CD8-positive, alpha-beta T cell (primary cell): ENCODE measurements at regions of chr14 and their contacts with region 1.

Region 1: GRCh38 chr14:75906676-75907280 is 75.0 kb downstream of the TGFB3 start:
- DNase-seq: peak; percentile 30 to 76 (median 70)
- ATAC-seq: peak; percentile 49
- H3K4me3 ChIP-seq: no peak overlapping the region
- H3K4me3 Mint-ChIP-seq: no peak overlapping the region
- H3K27ac ChIP-seq: no peak overlapping the region
- H3K27ac Mint-ChIP-seq: no peak overlapping the region
- H3K4me1 ChIP-seq: no peaks in the 10 kb centered on the region
- H3K4me1 Mint-ChIP-seq: no peaks in the 10 kb centered on the region
- H3K27me3 ChIP-seq: no peaks in the 10 kb centered on the region
- H3K27me3 Mint-ChIP-seq: no peaks in the 10 kb centered on the region
- CTCF ChIP-seq: peak; percentile 86

Region 2: GRCh38 chr14:75709207-75709812 is 197.5 kb before region 1 on chr14:
- CTCF ChIA-PET with region 1: interaction called, 10 read pairs
- POLR2A ChIA-PET with region 1: no interaction called
- intact Hi-C with region 1: loop called in 1 of 2 experiments (anchors 10 kb)
- DNase-seq: peak; percentile 23 to 76 (median 62)
- ATAC-seq: peak; percentile 68
- H3K4me3 ChIP-seq: no peak overlapping the region
- H3K4me3 Mint-ChIP-seq: no peak overlapping the region
- H3K27ac ChIP-seq: no peak overlapping the region
- H3K27ac Mint-ChIP-seq: no peak overlapping the region
- H3K4me1 ChIP-seq: no peaks in the 10 kb centered on the region
- H3K4me1 Mint-ChIP-seq: no peaks in the 10 kb centered on the region
- H3K27me3 ChIP-seq: no peaks in the 10 kb centered on the region
- H3K27me3 Mint-ChIP-seq: no peaks in the 10 kb centered on the region
- CTCF ChIP-seq: peak; percentile 78

Region 3: GRCh38 chr14:75888945-75889344 is 17.8 kb before region 1 on chr14:
- CTCF ChIA-PET with region 1: interaction called, 27 read pairs
- POLR2A ChIA-PET with region 1: no interaction called
- intact Hi-C with region 1: no loop called
- DNase-seq: no peak
- ATAC-seq: no peak
- H3K4me3 ChIP-seq: no peak overlapping the region
- H3K4me3 Mint-ChIP-seq: no peak overlapping the region
- H3K27ac ChIP-seq: no peak overlapping the region
- H3K27ac Mint-ChIP-seq: no peak overlapping the region
- H3K4me1 ChIP-seq: no peaks in the 10 kb centered on the region
- H3K4me1 Mint-ChIP-seq: no peaks in the 10 kb centered on the region
- H3K27me3 ChIP-seq: no peaks in the 10 kb centered on the region
- H3K27me3 Mint-ChIP-seq: no peaks in the 10 kb centered on the region
- CTCF ChIP-seq: no peak

Region 4: GRCh38 chr14:75896341-75896740 is 10.4 kb before region 1 on chr14:
- CTCF ChIA-PET with region 1: interaction called, 27 read pairs
- POLR2A ChIA-PET with region 1: no interaction called
- intact Hi-C with region 1: no loop called
- DNase-seq: no peak
- ATAC-seq: no peak
- H3K4me3 ChIP-seq: no peak overlapping the region
- H3K4me3 Mint-ChIP-seq: no peak overlapping the region
- H3K27ac ChIP-seq: no peak overlapping the region
- H3K27ac Mint-ChIP-seq: no peak overlapping the region
- H3K4me1 ChIP-seq: no peaks in the 10 kb centered on the region
- H3K4me1 Mint-ChIP-seq: peaks cover 7% of the 10 kb centered on the region
- H3K27me3 ChIP-seq: no peaks in the 10 kb centered on the region
- H3K27me3 Mint-ChIP-seq: no peaks in the 10 kb centered on the region
- CTCF ChIP-seq: no peak

Region 5: DNA sequence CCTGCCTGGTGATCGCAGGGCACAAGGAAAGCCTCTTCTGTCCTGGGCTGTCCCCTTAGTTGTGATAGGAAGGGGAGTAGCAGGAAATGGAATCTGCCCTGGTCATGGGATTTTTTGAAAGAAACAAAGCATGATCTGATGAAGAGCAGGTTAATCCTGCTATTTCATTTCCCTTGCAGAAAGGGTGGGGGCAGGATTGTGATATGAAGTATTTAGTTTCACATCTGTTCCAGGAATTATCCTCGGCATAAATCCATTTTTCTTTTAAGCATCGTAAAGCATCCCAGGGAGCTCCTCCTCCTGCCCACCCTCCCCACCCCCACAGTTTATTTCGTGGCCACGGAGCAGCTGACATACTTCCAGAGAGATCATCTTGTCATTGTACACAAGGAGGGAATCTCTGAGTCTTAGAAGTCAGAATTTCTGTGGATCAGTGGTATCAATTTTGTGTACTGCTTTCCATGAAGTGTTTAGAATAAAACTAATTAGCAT is 22.0 kb after region 1 on chr14:
- CTCF ChIA-PET with region 1: no interaction called
- POLR2A ChIA-PET with region 1: no interaction called
- intact Hi-C with region 1: no loop called
- DNase-seq: no peak
- ATAC-seq: no peak
- H3K4me3 ChIP-seq: no peak overlapping the region
- H3K4me3 Mint-ChIP-seq: no peak overlapping the region
- H3K27ac ChIP-seq: no peak overlapping the region
- H3K27ac Mint-ChIP-seq: no peak overlapping the region
- H3K4me1 ChIP-seq: no peaks in the 10 kb centered on the region
- H3K4me1 Mint-ChIP-seq: no peaks in the 10 kb centered on the region
- H3K27me3 ChIP-seq: no peaks in the 10 kb centered on the region
- H3K27me3 Mint-ChIP-seq: no peaks in the 10 kb centered on the region
- CTCF ChIP-seq: no peak

Region 6: DNA sequence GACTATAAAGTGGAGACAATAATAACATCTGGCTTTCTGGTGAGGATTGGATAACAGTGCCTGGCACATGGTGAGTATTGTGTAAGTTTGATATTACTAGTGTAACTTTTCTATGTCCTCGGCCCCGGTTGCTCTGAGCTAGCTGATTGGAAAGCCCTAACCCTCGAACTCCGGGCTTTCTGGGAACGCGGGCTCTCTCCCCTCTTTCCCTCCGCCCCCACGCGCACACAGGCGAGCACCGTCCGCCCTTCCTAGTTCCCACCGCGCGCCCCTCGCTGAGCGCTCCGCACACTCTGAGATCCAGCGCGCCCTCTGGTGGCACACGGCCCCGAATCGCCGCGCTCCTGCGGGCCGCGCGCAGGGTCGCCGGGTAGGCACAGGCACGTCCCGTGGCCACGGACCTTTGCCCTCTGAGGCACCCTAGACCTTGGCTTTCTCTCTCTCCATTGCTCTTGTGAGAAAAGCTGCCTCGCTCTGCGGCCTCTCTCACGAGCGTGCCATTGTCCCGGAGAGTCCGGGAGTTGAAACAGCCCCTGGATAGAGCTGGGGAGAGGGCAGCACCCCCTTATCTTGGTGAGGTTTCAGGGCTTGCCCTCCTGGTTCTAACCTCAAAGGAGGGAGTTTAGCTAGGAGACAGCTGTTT is 446.0 kb after region 1 on chr14:
- CTCF ChIA-PET with region 1: no interaction called
- POLR2A ChIA-PET with region 1: no interaction called
- intact Hi-C with region 1: loop called in 1 of 2 experiments (anchors 5 kb)
- DNase-seq: peak; percentile 5 to 67 (median 50)
- ATAC-seq: no peak
- H3K4me3 ChIP-seq: no peak overlapping the region
- H3K4me3 Mint-ChIP-seq: peak overlapping the region; percentile 30
- H3K27ac ChIP-seq: no peak overlapping the region
- H3K27ac Mint-ChIP-seq: no peak overlapping the region
- H3K4me1 ChIP-seq: no peaks in the 10 kb centered on the region
- H3K4me1 Mint-ChIP-seq: peaks cover 4% of the 10 kb centered on the region
- H3K27me3 ChIP-seq: peaks cover 0 to 2% of the 10 kb centered on the region in 2 experiments
- H3K27me3 Mint-ChIP-seq: peaks cover 33% of the 10 kb centered on the region
- CTCF ChIP-seq: peak; percentile 51